ENCODE measurements at regions of chr10 and their contacts with region 1.

Region 1: DNA sequence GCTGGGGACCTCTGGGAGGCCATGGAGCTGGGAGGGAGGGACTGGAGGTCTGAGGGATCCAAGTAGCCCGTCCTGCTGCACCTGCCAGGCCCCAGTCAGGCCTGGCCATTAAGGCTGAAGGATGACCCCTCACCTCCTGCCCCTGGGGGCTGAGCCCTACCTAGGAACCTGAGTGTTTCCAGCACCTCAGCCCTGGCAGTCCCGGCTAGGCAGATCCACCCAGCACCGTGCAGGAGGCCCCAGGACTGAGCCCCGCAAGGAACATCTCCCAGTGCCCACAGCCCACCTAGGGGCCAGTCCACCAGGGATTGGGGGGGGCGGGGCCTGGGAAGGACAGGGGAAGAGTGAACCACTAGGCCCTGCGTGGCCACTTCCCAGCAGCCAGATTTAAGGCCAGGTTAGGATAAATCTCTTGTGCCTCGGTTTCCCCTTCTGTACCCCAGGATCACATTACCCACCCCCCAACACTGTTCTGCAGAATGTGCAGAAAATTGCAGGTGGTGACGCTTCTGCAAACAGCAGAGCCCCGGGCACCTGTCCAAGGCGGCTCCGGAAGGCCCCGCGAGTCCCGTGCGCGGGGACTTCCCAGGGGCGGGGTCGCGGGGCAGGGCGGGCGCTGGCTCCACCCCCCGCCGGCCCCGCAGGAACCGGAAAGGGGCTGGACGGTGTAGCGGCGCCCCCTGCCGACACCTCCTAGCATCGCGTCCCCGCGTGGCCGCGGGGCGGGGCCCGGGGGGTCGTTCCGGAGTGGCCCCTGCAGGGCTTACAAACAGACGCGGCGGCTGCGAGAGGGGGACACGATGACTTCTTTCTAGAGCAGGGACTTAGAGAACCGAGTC is 55.9 kb downstream of the PWWP2B start:
- DNase-seq: peak; percentile 94
- ATAC-seq: peak; percentile 88
- H3K4me3 Mint-ChIP-seq: no peak overlapping the region
- H3K27ac Mint-ChIP-seq: peak overlapping the region; percentile 8
- H3K4me1 Mint-ChIP-seq: peaks cover 18% of the 10 kb centered on the region
- H3K27me3 Mint-ChIP-seq: no peaks in the 10 kb centered on the region

Region 2: DNA sequence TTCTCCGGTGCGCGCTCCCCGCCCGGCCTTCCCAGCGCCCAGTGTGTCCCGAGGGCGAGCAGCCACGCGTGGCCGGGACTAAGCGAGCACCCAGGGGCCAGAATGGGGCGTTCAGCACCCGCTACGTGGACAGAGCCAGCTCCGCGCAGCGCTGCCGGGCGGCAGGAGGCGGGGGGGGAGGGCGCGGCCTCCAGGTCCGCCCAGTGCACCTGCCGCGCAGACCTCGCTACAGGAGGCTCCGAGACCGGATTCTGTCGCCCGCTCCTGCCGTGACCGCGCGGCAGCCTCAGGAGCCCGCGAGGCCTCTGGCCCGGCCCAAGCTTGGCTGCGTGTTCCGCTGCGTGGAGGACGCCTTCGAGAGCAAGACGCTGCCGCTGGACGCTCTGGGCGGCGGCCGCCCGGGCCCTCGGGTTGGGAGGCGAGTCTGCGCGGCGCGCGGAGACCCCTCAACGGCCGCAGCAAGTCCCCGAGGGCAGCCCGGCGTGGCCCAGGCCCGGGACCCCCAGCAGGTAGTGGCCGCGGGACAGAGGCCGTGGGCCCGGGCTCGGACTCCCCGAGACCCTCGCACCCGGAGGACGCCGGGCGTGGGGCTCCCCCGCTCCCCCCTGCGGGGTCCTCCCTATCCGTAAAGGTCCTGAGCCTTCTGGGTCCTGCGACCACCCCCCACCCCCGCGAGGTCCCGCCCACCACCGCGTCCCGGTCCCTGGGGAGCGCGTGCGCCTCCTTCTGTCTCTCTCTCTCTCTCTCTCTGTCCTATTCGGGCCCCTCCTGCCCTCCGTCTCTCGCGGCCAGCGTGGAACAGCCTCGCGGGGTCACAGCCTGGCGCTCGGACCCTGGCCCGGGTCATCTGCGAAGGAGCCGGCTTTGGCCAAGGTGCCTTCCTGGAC is 267.0 kb before region 1 on chr10:
- CTCF ChIA-PET with region 1: no interaction called
- POLR2A ChIA-PET with region 1: no interaction called
- intact Hi-C with region 1: loop called in 1 of 2 experiments (anchors 1 kb)
- DNase-seq: peak; percentile 76
- ATAC-seq: peak; percentile 85
- H3K4me3 Mint-ChIP-seq: no peak overlapping the region
- H3K27ac Mint-ChIP-seq: no peak overlapping the region
- H3K4me1 Mint-ChIP-seq: peaks cover 3% of the 10 kb centered on the region
- H3K27me3 Mint-ChIP-seq: peaks cover 37% of the 10 kb centered on the region

Region 3: DNA sequence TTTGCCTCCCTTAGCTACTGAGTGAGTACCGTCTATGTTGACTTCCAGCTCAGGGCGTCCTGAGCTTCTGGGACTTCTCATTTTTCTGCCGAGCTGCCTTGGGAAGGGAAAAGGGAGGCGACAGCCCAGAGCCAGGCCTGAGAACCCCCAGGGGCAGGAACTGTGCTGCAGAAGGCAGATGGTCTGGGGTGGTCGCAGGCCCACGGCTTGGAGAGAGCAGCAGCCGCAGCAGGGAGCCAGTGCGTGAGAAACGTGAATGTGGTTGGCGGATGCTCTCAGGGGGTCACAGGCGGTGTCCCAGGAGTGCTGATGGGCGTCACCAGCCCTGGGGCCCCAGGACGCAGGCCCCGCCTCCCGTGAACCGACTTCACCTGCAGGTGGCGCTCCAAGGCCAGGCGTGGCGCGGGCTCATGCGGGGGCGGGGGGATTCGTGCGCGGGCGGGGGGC is 65.1 kb before region 1 on chr10:
- CTCF ChIA-PET with region 1: interaction called, 3 read pairs
- POLR2A ChIA-PET with region 1: no interaction called
- intact Hi-C with region 1: loop called (anchors 1 to 2 kb)
- DNase-seq: peak; percentile 88
- ATAC-seq: peak; percentile 57
- H3K4me3 Mint-ChIP-seq: peak overlapping the region; percentile 62
- H3K27ac Mint-ChIP-seq: peak overlapping the region; percentile 71
- H3K4me1 Mint-ChIP-seq: peaks cover 3% of the 10 kb centered on the region
- H3K27me3 Mint-ChIP-seq: no peaks in the 10 kb centered on the region

Region 4: GRCh38 chr10:132396495-132397035 is 56.3 kb before region 1 on chr10:
- CTCF ChIA-PET with region 1: interaction called, 3 read pairs
- POLR2A ChIA-PET with region 1: no interaction called
- intact Hi-C with region 1: loop called in 1 of 2 experiments (anchors 1 kb)
- DNase-seq: peak; percentile 78
- ATAC-seq: peak; percentile 75
- H3K4me3 Mint-ChIP-seq: no peak overlapping the region
- H3K27ac Mint-ChIP-seq: no peak overlapping the region
- H3K4me1 Mint-ChIP-seq: peaks cover 13% of the 10 kb centered on the region
- H3K27me3 Mint-ChIP-seq: no peaks in the 10 kb centered on the region